Activated naive CD4-positive, alpha-beta T cell treated with anti-CD3 and anti-CD28 coated beads for 36 hours (primary cell): ENCODE measurements at regions of chr3 and their contacts with region 1.

Region 1: GRCh38 chr3:112013058-112013783 is 14.5 kb downstream of the TAGLN3 start:
- DNase-seq: peak; percentile 81
- H3K4me3 Mint-ChIP-seq: no peak overlapping the region
- H3K27ac Mint-ChIP-seq: no peak overlapping the region
- H3K4me1 Mint-ChIP-seq: peaks cover 17% of the 10 kb centered on the region
- H3K27me3 Mint-ChIP-seq: no peaks in the 10 kb centered on the region

Region 2: GRCh38 chr3:110869736-110870135 is 1143.5 kb before region 1 on chr3:
- CTCF ChIA-PET with region 1: no interaction called
- intact Hi-C with region 1: no loop called
- DNase-seq: no peak
- H3K4me3 Mint-ChIP-seq: no peak overlapping the region
- H3K27ac Mint-ChIP-seq: no peak overlapping the region
- H3K4me1 Mint-ChIP-seq: no peaks in the 10 kb centered on the region
- H3K27me3 Mint-ChIP-seq: peaks cover 6% of the 10 kb centered on the region

Region 3: DNA sequence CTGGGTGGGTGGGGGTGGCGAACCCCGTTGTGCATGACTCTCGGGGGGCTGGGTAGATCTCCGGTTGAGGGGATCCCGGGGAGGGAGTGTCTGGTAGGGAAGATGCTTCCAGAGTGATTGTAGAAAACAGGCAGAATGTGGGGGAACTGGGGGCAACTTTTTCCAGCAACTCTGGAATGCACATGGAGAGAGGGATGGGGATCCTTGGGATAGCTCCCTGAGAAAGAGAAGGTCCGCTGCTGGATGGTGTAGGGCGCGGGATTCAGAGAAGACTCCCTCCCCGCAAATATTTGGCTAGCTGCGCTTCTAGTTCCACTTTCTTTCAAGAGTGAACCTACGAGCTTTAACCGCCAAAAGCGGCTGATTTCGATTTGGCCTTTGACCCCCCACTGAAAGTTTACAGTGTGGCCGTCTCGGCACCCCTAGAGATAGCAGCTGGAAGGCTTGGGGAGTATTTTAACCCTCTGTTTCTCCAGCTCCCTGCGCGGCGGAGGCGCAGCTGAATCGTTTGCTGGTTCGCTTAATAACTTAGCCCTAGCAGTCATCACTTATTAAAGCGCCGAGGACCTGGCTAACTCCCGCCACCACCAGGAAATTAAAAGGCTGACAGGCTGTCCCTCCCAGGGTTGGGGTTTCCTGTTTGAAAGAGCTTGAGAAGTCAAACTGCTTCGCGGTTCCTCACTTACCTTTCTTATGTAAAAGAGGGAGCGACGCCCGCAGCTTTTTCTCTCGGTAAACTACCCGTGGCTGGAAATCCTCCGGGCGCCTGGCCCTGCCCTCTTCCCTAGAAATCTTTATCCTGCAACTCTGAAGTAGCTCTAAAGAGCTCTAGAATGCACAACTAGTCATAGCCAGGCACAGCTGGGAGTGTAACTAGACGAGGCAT is 153.0 kb before region 1 on chr3:
- CTCF ChIA-PET with region 1: interaction called, 18 read pairs
- intact Hi-C with region 1: loop called (anchors 2 kb)
- DNase-seq: peak; percentile 75
- H3K4me3 Mint-ChIP-seq: peak overlapping the region; percentile 84
- H3K27ac Mint-ChIP-seq: no peak overlapping the region
- H3K4me1 Mint-ChIP-seq: peaks cover 10% of the 10 kb centered on the region
- H3K27me3 Mint-ChIP-seq: peaks cover 45% of the 10 kb centered on the region

Region 4: GRCh38 chr3:111978493-111979433 is 34.5 kb before region 1 on chr3 and contains the start of gene ABHD10:
- CTCF ChIA-PET with region 1: interaction called, 49 read pairs
- intact Hi-C with region 1: no loop called
- DNase-seq: peak; percentile 98
- H3K4me3 Mint-ChIP-seq: peak within 1 kb of the TSS; percentile 87
- H3K27ac Mint-ChIP-seq: peak within 1 kb of the TSS; percentile 89
- H3K4me1 Mint-ChIP-seq: peaks cover 38% of the 10 kb centered on the region
- H3K27me3 Mint-ChIP-seq: no peaks in the 10 kb centered on the region
- total RNA-seq, gene ABHD10: 53.1 to 54.6 TPM

Region 5: GRCh38 chr3:111998636-111999483 is 14.4 kb before region 1 on chr3 and contains the start of gene TAGLN3:
- CTCF ChIA-PET with region 1: interaction called, 454 read pairs
- intact Hi-C with region 1: loop called (anchors 1 kb)
- DNase-seq: peak; percentile 20
- H3K4me3 Mint-ChIP-seq: peak within 1 kb of the TSS; percentile 64
- H3K27ac Mint-ChIP-seq: no peak within 1 kb of the TSS
- H3K4me1 Mint-ChIP-seq: peaks cover 45% of the 10 kb centered on the region
- H3K27me3 Mint-ChIP-seq: no peaks in the 10 kb centered on the region
- total RNA-seq, gene TAGLN3: 1.2 TPM

Region 6: GRCh38 chr3:112043603-112044201 is 30.5 kb after region 1 on chr3:
- CTCF ChIA-PET with region 1: interaction called, 17 read pairs
- intact Hi-C with region 1: loop called (anchors 1 kb)
- DNase-seq: peak; percentile 64
- H3K4me3 Mint-ChIP-seq: no peak overlapping the region
- H3K27ac Mint-ChIP-seq: no peak overlapping the region
- H3K4me1 Mint-ChIP-seq: peaks cover 3% of the 10 kb centered on the region
- H3K27me3 Mint-ChIP-seq: no peaks in the 10 kb centered on the region